WTC11 (cell line): ENCODE measurements at regions of chr10 and their contacts with region 1.

Region 1: DNA sequence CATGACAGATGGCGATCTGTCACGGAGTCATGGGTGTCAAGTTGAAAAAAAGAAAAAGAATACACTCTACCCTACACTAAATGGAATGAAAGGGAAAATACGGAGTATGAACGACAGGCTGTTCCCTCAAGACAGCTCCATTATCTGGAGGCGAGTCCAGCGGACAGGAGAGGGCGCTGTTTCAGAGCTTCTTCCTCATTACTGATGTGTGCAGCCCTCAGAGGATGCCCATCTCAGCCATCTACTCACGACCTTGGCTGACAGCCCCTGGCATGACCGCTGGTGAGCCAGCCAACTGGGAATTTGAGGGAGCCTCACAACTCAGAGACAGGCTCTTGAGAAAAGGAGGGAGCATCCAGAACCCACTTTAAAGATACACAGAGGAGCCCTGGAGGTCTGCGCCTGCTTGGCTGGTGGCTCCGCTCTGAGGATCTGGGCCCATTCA is 49.6 kb upstream of the SMNDC1 start:
- DNase-seq: peak; percentile 88
- ATAC-seq: peak; percentile 83
- H3K4me3 Mint-ChIP-seq: peak overlapping the region; percentile 38
- H3K27ac Mint-ChIP-seq: no peak overlapping the region
- H3K4me1 Mint-ChIP-seq: peaks cover 53% of the 10 kb centered on the region
- H3K27me3 Mint-ChIP-seq: no peaks in the 10 kb centered on the region
- CTCF ChIP-seq: peak; percentile 65

Region 2: DNA sequence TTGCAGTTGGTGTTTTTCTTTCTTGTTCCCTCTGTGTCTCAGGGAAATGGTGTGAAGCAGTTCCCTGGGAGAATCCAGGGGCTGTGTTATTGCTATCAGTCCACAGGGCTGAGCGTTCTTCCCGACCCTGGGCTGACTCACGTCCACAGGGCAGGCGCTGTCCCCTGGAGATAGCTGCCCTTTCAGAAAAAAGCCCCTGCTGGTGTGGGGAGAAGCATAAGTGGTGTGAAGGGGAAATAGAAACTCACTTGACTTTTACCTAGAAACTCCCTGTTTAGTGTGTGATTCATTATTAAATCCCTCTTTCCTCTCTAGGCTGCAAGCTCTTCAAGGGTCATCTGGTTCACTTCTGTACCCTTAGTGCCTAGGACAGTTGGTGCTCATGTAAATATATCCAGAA is 13.7 kb after region 1 on chr10:
- CTCF ChIA-PET with region 1: interaction called, 22 read pairs
- POLR2A ChIA-PET with region 1: no interaction called
- DNase-seq: no peak
- ATAC-seq: no peak
- H3K4me3 Mint-ChIP-seq: no peak overlapping the region
- H3K27ac Mint-ChIP-seq: no peak overlapping the region
- H3K4me1 Mint-ChIP-seq: peaks cover 19% of the 10 kb centered on the region
- H3K27me3 Mint-ChIP-seq: no peaks in the 10 kb centered on the region
- CTCF ChIP-seq: no peak

Region 3: GRCh38 chr10:110392868-110393648 is 38.7 kb after region 1 on chr10:
- CTCF ChIA-PET with region 1: interaction called, 10 read pairs
- POLR2A ChIA-PET with region 1: no interaction called
- DNase-seq: no peak
- ATAC-seq: peak; percentile 31
- H3K4me3 Mint-ChIP-seq: no peak overlapping the region
- H3K27ac Mint-ChIP-seq: no peak overlapping the region; the same call in 1 of the 2 replicates
- H3K4me1 Mint-ChIP-seq: peaks cover 25% of the 10 kb centered on the region
- H3K27me3 Mint-ChIP-seq: no peaks in the 10 kb centered on the region; the same call in 1 of the 2 replicates
- CTCF ChIP-seq: no peak

Region 4: GRCh38 chr10:110437761-110438341 is 83.5 kb after region 1 on chr10:
- CTCF ChIA-PET with region 1: interaction called, 11 read pairs
- POLR2A ChIA-PET with region 1: no interaction called
- DNase-seq: peak; percentile 5
- ATAC-seq: no peak
- H3K4me3 Mint-ChIP-seq: no peak overlapping the region
- H3K27ac Mint-ChIP-seq: no peak overlapping the region
- H3K4me1 Mint-ChIP-seq: peaks cover 15% of the 10 kb centered on the region
- H3K27me3 Mint-ChIP-seq: no peaks in the 10 kb centered on the region
- CTCF ChIP-seq: no peak

Region 5: DNA sequence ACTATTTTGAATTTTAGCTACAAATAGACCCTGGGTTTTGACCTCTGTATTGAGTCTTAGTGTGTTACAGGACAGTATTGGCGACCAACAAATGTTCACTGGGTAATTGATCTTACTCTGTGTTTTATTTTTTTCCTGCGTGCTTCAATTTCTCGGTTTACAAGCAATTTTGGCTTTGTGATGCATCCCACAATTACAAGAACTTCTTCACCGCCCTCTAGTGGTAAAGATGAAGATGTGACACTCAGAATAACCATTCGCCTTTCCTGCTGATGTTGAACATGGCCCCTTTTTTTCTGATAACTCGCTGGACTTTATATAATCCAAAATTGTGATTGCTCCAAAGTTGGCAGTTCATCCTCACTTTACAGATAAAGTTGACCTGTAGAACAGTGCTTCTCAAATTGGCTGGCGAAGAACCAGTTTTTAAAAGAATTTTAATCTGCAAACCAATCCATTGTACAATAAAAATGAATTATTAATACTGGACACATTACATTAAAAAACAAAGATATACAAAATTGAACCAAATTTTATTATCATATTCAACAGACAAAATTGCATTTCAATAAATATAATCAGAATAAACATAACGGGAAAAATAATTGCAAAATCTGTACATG is 192.9 kb after region 1 on chr10:
- CTCF ChIA-PET with region 1: interaction called, 48 read pairs
- POLR2A ChIA-PET with region 1: no interaction called
- DNase-seq: no peak
- ATAC-seq: peak; percentile 44; the same call in 1 of the 2 replicates
- H3K4me3 Mint-ChIP-seq: no peak overlapping the region
- H3K27ac Mint-ChIP-seq: no peak overlapping the region
- H3K4me1 Mint-ChIP-seq: peaks cover 11% of the 10 kb centered on the region
- H3K27me3 Mint-ChIP-seq: no peaks in the 10 kb centered on the region; the same call in 1 of the 2 replicates
- CTCF ChIP-seq: peak; percentile 75